Activated T-helper 2 cell treated with anti-CD3 and anti-CD28 coated beads, Interferon-gamma antibody, Interleukin-2, Interleukin-4, amounts not matched to agents 10 μg/mL and 5 μg/mL and 100 μg/mL, durations not matched to agents 14 hours and 24 hours and 36 hours (primary cell): ENCODE measurements at regions of chr1 and their contacts with region 1.

Region 1: GRCh38 chr1:92994105-92994712 is 32.9 kb upstream of the DIPK1A start:
- DNase-seq: peak; percentile 57
- H3K4me3 Mint-ChIP-seq: no peak overlapping the region
- H3K27ac Mint-ChIP-seq: peak overlapping the region; percentile 14
- H3K4me1 Mint-ChIP-seq: peaks cover 46% of the 10 kb centered on the region
- H3K27me3 Mint-ChIP-seq: no peaks in the 10 kb centered on the region

Region 2: DNA sequence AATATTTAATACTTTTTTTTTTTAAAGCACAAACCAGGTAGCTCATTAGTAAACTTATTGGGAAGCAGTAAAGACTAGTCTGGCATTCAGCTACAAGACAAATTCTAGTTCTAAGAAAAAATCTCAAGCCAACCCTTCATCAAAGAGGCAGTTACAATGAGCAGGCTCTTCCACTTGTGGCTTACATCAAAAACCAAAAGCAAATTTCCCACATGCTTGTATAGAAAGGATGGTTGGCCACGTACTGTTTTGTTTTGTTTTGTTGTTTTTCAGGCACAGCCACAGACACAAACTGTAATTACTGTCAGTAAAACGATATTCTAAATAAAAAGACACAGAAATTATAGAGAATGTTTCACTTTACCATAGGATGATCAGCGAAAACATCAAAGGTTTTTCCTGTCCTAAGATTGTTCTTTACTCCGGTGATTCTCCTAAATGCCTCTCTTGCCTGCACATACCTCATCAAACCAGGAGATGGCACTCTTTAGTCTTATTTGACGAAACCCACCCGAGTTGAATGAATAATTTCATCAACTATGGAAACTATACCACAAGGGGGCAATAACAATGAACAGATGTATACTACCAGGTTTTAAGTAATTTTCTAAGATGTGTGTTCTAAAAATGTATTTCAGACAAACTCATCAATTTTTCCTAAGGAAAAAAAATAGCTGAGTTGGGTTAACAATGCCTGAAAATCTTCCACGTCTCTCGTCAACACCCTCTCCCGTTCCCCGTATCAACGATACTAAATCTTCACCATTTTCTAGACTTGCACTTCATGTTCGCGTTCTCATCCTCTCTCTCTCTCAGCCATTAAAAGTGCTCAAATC is 135.4 kb before region 1 on chr1:
- intact Hi-C with region 1: loop called (anchors 1 kb)
- DNase-seq: peak; percentile 45
- H3K4me3 Mint-ChIP-seq: peak overlapping the region; percentile 52
- H3K27ac Mint-ChIP-seq: peak overlapping the region; percentile 61
- H3K4me1 Mint-ChIP-seq: peaks cover 28% of the 10 kb centered on the region
- H3K27me3 Mint-ChIP-seq: no peaks in the 10 kb centered on the region

Region 3: DNA sequence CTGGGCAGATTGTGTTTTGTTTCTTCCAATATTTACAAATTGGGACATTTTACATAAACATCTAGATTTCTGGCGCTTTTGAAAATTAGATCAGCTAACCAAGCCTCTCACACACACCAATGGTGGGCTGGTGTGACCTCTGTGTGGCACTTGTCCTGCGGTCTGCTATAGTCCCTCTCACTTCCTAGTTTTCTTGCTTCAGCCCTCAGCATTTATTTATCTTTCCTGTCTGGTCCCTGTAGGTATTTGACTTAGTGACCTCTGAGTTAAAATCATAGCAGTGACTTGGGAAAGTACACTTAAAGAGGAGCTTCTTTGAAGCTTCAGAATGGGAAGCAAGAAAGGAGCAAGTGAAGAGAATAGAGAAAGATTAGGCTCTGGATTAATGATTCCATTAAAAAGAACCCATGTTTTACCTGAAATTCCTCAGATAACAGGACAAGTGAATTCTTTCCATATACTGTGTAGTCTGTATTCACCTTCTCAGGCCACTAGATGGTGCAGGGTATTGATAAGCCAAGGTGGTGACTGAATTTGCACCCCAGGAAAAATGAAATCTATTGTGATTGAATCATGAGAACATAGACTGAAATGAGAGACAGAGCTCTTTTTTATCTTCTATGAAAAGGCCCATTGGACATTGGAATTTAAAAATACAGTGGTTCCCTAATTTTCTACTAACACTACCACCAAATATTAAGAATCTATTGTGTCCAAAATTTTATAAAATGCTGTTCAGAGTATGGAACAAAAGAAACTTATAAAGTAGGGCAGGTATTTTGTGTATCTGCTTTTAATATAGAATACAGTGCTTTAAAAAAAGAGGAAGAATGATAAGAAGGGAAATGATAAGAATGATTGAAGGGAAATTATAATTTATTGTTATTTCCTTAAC is 25.8 kb before region 1 on chr1:
- intact Hi-C with region 1: loop called (anchors 1 kb)
- DNase-seq: no peak
- H3K4me3 Mint-ChIP-seq: no peak overlapping the region
- H3K27ac Mint-ChIP-seq: no peak overlapping the region
- H3K4me1 Mint-ChIP-seq: peaks cover 28% of the 10 kb centered on the region
- H3K27me3 Mint-ChIP-seq: no peaks in the 10 kb centered on the region

Region 4: DNA sequence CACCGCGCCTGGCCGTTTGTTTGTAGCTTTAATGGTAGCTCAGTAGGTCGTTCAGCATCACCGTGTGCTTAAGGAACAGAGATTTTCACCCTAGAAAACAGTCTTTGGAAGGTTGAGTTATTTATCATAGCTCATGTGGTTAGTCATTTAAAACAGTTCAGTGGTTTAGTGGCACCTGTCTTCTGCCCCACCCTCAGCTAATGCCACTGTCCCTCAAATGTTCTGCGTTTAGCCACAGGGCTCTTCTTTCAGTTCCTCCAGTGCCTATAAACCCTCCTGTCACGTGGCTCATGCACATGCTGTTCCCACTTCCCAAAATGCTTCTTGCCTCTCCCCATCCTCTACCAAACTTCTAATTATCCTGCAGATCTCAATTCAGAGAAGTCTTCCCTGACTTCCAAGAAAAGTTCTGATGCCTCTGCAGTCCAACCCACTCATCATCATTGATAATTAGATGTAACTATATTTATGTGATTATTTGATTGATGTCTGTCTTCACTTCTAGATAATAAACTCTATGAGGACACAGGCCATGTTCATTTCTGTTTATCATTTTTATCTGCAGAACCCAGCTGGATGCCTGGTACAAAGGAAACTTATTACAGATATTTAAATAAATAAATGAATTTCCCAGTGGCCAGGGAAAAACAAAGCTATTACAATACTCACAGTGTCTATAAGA is 18.5 kb before region 1 on chr1:
- intact Hi-C with region 1: loop called (anchors 1 kb)
- DNase-seq: no peak
- H3K4me3 Mint-ChIP-seq: no peak overlapping the region
- H3K27ac Mint-ChIP-seq: peak overlapping the region; percentile 89
- H3K4me1 Mint-ChIP-seq: peaks cover 58% of the 10 kb centered on the region
- H3K27me3 Mint-ChIP-seq: no peaks in the 10 kb centered on the region

Region 5: DNA sequence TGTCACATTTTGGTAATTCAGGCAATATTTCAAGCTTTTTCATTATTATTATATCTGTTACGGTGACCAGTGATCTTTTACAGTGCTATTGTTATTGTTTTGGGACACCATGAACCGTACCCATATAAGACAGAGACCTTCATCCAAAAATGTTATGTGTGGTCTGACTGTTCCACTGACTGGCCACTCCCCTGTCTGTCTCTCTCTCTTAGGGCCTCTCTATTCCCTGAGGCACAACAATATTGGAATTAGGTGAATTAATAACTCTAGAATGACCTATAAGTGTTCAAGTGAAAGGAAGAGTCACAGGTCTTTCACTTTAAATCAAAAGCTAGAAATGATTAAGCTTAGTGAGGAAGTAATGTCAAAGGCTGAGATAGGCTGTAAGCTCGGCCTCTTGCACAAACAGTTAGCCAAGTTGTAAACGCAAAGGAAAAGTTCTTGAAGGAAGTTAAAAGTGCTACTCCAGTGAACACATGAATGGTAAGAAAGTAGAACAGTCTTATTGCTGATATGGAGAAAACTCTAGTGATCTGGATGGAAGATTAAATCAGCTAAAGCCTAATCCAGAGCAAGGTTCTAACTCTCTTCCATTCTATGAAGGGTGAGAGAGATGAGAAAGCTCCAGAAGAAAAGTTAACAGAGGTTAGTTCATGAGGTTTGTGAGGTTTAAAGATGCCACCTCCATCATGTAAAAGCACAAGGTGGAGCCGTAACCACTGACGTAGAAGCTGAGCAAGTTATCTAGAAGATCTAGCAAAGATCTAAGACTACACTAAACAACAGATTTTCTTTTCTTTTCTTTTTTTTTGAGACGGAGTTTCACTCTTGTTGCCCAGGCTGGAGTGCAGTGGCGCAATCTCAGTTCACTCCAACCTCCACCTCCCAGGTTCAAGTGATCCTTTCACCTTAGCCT is 13.2 kb before region 1 on chr1:
- intact Hi-C with region 1: loop called (anchors 1 kb)
- DNase-seq: peak; percentile 45
- H3K4me3 Mint-ChIP-seq: peak overlapping the region; percentile 41
- H3K27ac Mint-ChIP-seq: peak overlapping the region; percentile 98
- H3K4me1 Mint-ChIP-seq: peaks cover 55% of the 10 kb centered on the region
- H3K27me3 Mint-ChIP-seq: no peaks in the 10 kb centered on the region